OCI-LY7 (cell line): ENCODE measurements at regions of chr17 and their contacts with region 1.

Region 1: DNA sequence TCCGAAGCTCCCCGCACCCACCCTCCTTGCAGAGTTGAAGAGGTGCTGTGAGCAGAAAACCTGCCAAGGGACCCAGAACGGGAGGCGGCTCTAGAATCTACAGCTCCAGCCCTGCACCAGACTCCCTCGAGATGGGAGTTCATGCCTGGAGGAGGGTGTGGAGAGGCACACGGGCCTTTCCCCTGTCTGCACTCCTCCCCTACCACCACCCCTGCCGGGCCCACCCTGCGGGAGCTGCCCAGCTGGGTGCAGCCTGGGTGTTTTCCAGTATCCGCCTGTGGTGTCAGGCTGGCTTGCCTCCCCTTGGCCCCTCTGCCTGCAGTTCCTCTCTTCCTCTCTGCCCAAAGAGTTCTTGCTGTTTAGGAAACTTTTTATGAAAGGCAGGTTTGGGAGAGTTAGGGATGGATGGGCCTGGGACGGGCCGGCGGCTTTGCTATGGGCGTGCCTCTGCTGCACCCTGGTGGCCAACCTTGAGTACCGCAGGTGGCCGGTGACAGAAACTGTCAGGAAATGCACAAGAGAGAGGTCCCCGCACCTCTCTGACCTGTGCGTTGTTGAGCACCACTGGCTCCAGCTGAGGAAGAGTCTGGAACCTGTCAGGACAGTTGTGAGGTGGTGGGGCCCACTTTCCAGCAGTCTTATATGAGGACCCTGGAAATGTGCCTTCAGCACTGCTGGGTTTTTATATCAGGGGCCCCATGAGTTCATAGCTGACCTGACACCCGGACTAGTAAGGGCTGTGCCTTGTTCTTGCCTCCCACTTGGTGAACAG is 354.1 kb downstream of the SEC14L1 start:
- DNase-seq: peak; percentile 82
- H3K4me3 ChIP-seq: peak overlapping the region; percentile 7
- H3K27ac ChIP-seq: peak overlapping the region; percentile 72
- H3K4me1 ChIP-seq: peaks cover 53% of the 10 kb centered on the region
- CTCF ChIP-seq: peak; percentile 100

Region 2: GRCh38 chr17:77280980-77281903 is 213.6 kb before region 1 on chr17:
- CTCF ChIA-PET with region 1: no interaction called
- POLR2A ChIA-PET with region 1: no interaction called
- intact Hi-C with region 1: loop called (anchors 5 kb)
- DNase-seq: peak; percentile 87
- H3K4me3 ChIP-seq: peak overlapping the region; percentile 75
- H3K27ac ChIP-seq: peak overlapping the region; percentile 21
- H3K4me1 ChIP-seq: peaks cover 22% of the 10 kb centered on the region
- CTCF ChIP-seq: peak; percentile 51; the same call in 1 of the 2 replicates

Region 3: DNA sequence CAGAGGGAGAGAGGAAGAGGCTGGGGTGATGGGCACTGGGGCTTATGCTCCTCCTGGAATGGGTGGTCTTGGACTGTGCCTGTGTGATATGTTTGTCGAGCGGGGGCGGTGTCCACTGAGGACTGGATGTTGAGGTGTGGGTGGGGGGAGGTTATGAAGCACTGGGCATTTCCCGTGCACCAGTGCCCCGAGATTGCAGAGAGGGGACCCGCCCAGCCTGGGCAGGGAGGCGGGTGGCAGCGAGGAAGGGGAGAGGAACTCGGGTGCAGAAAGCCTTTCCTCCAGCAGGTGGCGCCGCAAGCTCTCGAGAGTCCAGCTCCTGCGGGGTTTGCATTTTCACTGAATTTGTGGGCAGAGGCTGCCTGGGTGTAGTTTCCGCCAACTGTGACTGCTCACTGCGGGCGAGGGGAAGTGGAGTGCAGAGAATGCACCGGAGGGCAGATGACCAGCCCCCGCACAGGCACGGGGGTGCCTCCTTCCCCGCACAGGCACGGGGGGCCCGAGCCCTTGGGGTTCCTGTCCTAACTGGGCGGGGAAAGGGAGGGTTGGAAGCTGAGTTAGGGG is 163.5 kb before region 1 on chr17:
- CTCF ChIA-PET with region 1: no interaction called
- POLR2A ChIA-PET with region 1: interaction called, 4 read pairs
- intact Hi-C with region 1: loop called (anchors 1 kb)
- DNase-seq: peak; percentile 98
- H3K4me3 ChIP-seq: peak overlapping the region; percentile 62
- H3K27ac ChIP-seq: peak overlapping the region; percentile 92
- H3K4me1 ChIP-seq: peaks cover 86% of the 10 kb centered on the region
- CTCF ChIP-seq: peak; percentile 99

Region 4: GRCh38 chr17:77404812-77405581 is 89.9 kb before region 1 on chr17:
- CTCF ChIA-PET with region 1: interaction called, 11 read pairs
- POLR2A ChIA-PET with region 1: interaction called, 5 read pairs
- intact Hi-C with region 1: loop called (anchors 1 kb)
- DNase-seq: peak; percentile 97
- H3K4me3 ChIP-seq: peak overlapping the region; percentile 72
- H3K27ac ChIP-seq: peak overlapping the region; percentile 90
- H3K4me1 ChIP-seq: peaks cover 100% of the 10 kb centered on the region
- CTCF ChIP-seq: 0 out of 2 replicates have a peak, but pooled peaks have one; percentile 25

Region 5: DNA sequence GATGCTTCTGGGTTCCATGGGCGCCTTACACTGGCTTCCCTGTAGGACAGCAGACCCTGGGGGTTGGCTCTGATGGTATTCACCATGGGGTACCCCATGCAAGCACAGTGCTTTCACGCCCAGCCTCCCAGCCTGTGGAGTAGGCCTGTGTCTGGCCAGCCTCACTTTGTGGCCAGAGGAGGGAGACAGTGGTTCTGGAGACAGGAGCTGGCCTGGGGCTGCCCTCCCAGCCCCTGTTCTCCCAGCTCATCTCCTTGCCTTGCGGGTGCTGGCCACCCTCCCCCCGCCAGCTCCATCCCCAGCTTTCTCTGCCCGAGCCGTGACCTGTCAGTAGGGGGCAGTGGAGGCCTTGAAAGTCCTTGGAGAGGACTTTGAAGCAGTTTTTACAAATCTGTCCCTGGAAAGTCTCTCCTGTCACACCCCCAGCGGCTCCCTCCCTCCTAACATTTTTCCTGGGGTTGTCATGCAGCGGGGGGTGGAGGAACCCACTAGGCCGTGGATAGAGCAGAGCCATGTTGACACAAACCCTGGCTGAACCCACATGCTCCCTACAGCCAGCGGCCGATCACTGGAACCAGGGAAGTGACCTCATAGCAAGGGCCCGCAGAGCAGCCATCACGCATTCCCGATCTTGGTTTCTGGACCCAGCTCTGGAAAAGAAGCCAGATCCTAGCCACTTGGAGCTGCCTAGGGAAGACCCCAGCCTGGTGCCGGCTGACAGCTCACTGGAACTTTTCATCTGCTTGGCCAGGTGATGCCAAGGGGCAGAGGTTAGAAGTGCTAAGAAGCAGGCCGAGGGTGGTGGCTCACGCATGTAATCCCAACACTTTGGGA is 64.7 kb before region 1 on chr17:
- CTCF ChIA-PET with region 1: interaction called, 18 read pairs
- POLR2A ChIA-PET with region 1: interaction called, 4 read pairs
- intact Hi-C with region 1: loop called (anchors 1 kb)
- DNase-seq: peak; percentile 89
- H3K4me3 ChIP-seq: peak overlapping the region; percentile 15
- H3K27ac ChIP-seq: peak overlapping the region; percentile 65
- H3K4me1 ChIP-seq: peaks cover 100% of the 10 kb centered on the region
- CTCF ChIP-seq: peak; percentile 99

Region 6: GRCh38 chr17:77451245-77451893 is 43.5 kb before region 1 on chr17:
- CTCF ChIA-PET with region 1: no interaction called
- POLR2A ChIA-PET with region 1: no interaction called
- intact Hi-C with region 1: loop called (anchors 2 kb)
- DNase-seq: peak; percentile 84
- H3K4me3 ChIP-seq: peak overlapping the region; percentile 76
- H3K27ac ChIP-seq: peak overlapping the region; percentile 95
- H3K4me1 ChIP-seq: peaks cover 69% of the 10 kb centered on the region
- CTCF ChIP-seq: no peak

Region 7: DNA sequence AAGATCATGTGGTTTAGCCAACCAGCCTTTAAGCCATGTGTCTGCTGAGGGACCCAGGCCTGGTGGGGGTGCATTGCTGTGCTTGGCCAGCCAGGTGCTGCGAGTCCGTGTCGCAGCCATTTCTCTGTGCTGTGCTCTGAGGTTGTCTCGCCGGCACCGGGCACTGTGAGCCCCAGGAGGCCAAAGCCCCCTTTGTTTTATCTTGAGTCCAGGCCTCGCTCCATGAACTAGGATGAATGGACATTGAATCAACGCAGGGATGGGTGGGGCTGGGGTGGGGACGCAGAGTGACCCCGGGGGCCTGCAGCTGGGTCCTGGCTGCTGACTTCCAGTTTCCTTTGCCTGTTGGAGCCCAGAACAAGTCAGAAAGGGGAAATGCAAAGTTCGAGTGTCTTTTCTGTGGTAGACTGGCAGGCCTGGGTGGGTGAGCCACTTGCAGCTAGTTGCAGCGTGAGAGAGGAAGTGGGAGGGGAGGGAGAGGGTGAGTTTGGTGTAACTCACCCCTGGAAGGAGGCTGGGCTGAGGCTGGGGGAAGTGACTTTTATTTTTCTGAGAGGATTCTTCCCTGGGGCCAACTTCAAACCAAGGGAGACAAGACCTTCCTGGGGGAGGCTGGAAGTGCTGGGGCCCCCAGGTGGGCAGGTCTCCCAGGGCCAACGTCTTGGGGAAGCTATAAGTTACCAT is 29.4 kb before region 1 on chr17:
- CTCF ChIA-PET with region 1: no interaction called
- POLR2A ChIA-PET with region 1: no interaction called
- intact Hi-C with region 1: loop called (anchors 2 kb)
- DNase-seq: peak; percentile 96
- H3K4me3 ChIP-seq: peak overlapping the region; percentile 52
- H3K27ac ChIP-seq: peak overlapping the region; percentile 95
- H3K4me1 ChIP-seq: peaks cover 97% of the 10 kb centered on the region
- CTCF ChIP-seq: no peak

Region 8: DNA sequence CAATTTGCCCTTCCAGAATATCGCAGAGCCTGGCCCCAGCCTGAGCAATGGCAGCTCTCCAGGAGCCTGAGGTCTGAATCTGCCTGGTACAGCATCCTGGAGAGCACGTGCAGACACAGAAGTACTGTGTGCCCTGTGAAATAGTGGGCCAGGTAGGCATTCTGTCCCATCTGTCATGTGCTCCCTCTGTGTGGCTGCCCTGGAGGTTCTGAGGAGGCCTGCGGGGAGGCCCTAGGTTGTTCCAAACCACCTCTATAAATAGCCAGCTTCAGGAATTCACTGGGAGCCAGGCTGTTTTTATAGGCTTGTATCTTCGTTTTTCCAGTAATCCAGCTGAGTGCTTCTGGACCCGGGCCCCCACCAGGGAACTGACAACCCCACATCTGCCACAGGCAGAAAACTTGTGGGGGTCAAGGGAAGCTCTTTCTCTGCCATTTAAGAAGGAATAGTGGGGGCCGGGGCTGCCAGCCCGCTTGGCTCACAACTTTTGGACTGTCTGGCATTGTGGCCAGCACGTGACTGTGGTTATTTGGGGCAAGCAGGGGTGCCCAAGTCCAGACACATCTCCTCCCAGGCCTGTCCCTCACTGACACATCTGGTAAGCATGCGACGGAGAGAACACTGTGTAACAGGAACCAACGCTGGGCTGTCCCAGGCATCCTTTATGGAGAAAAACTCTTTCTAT is 107.4 kb after region 1 on chr17:
- CTCF ChIA-PET with region 1: no interaction called
- POLR2A ChIA-PET with region 1: no interaction called
- intact Hi-C with region 1: no loop called
- DNase-seq: no peak
- H3K4me3 ChIP-seq: no peak overlapping the region
- H3K27ac ChIP-seq: no peak overlapping the region
- H3K4me1 ChIP-seq: no peaks in the 10 kb centered on the region
- CTCF ChIP-seq: no peak